ENCODE measurements at regions of chr21 and their contacts with region 1.

Region 1: DNA sequence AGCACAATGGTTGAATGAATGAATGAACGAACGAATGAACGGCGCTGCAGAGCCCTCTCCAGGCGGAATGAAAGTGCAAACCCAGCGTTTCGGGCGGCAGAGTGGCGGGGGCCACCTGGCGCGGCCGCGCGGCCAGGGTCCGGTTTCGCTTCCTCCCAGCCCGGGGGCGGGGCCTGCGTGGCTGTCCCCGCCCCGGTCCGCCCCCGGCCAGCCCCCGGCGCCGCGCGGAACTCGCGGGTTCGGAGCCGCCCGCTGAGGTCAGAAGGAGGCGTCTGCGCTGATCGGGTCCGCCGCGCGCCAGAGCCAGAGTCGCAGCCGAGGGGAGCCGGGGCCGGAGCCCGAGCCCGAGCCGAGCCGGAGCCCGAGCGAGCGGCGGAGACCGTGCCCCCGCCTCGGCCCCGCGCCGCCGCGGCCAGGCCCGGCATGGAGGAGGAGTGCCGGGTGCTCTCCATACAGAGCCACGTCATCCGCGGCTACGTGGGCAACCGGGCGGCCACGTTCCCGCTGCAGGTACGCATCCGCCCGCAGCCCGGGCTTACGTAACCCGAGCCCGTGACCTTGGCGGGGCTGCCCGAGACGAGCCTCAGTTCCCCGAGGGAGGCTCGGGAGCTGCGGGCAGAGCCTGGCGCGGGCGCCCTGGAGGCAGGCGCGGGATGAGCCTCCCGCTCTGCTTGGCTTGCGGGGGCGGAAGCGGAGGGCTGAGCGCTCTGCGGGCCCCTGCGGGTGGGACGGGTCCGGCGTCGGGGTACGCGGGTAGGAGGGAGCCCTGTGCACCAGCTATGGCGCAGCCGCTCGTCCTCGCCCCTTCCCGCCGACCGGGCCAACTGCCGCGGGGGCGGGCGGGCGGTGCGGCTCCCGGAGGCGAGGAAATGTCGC is at the start of gene PDXK:
- DNase-seq: peak; percentile 49 to 91 (median 75)
- ATAC-seq: peak; percentile 77
- H3K4me3 ChIP-seq: peak within 1 kb of the TSS; percentile 70 to 83
- H3K4me3 Mint-ChIP-seq: peak within 1 kb of the TSS; percentile 84
- H3K27ac ChIP-seq: peak within 1 kb of the TSS; percentile 48 to 74
- H3K27ac Mint-ChIP-seq: peak within 1 kb of the TSS; percentile 27
- H3K4me1 ChIP-seq: peaks cover 16% of the 10 kb centered on the region
- H3K4me1 Mint-ChIP-seq: peaks cover 29% of the 10 kb centered on the region
- H3K27me3 ChIP-seq: no peaks in the 10 kb centered on the region
- H3K27me3 Mint-ChIP-seq: no peaks in the 10 kb centered on the region
- CTCF ChIP-seq: no peak
- total RNA-seq, gene PDXK: 60.3 to 71.1 TPM

Region 2: DNA sequence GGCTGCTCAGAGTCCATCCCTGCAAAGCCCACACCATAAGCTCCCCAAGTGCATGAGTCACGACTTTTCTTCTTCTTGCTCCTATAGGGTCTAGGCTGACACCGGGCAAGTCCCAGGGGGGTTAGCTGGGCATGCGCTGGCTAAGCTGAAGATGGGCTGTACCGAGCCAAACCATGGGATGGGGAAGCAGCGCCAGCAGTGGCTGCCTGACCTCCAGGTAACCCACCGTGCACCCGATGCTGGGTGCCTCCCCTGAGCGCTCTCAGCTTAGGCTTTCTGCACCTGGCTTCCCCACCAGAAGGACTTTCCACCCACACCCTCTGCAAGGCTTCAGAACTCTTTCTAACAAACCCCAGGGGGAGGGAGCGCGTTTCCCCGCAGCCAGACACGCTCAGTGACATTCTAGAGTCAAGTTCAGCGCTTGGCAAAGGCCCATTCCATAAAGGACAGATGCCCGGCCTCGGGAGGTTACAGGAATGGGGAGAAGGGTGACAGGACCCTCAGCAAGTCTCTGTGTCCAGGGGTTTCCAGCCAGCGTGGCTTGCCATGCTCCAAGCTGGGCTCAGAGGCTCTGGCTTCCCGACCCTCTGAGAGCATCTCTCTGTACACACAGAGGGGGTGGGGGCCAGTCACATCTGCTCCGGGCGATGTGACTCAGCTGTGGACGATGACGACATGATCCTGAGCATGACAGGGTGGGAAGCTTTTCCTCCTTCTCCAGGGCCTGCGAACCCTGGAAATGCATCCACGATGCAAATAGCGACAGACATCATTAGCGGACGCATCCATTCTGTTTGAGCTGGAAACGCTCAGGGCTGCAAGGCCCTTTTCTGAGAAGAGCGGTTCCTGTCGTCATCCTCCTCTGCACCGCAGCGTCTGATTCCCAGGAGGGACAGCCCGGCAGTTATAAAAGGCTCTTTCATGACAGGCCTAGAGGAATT is 400.0 kb before region 1 on chr21:
- CTCF ChIA-PET with region 1: no interaction called
- POLR2A ChIA-PET with region 1: no interaction called
- intact Hi-C with region 1: no loop called
- DNase-seq: no peak
- ATAC-seq: no peak
- H3K4me3 ChIP-seq: no peak overlapping the region
- H3K4me3 Mint-ChIP-seq: no peak overlapping the region
- H3K27ac ChIP-seq: no peak overlapping the region
- H3K27ac Mint-ChIP-seq: no peak overlapping the region
- H3K4me1 ChIP-seq: no peaks in the 10 kb centered on the region
- H3K4me1 Mint-ChIP-seq: peaks cover 2% of the 10 kb centered on the region
- H3K27me3 ChIP-seq: no peaks in the 10 kb centered on the region
- H3K27me3 Mint-ChIP-seq: peaks cover 5% of the 10 kb centered on the region
- CTCF ChIP-seq: no peak

Region 3: GRCh38 chr21:43659136-43660000 is 59.7 kb before region 1 on chr21 and contains the starts of genes HSF2BP and RRP1B:
- CTCF ChIA-PET with region 1: no interaction called
- POLR2A ChIA-PET with region 1: no interaction called
- intact Hi-C with region 1: loop called (anchors 2 kb)
- DNase-seq: peak; percentile 65 to 91 (median 73)
- ATAC-seq: peak; percentile 82
- H3K4me3 ChIP-seq: peak within 1 kb of the TSS; percentile 81 to 84
- H3K4me3 Mint-ChIP-seq: peak within 1 kb of the TSS; percentile 93
- H3K27ac ChIP-seq: peak within 1 kb of the TSS; percentile 83 to 86
- H3K27ac Mint-ChIP-seq: peak within 1 kb of the TSS; percentile 92
- H3K4me1 ChIP-seq: peaks cover 31% of the 10 kb centered on the region
- H3K4me1 Mint-ChIP-seq: peaks cover 46% of the 10 kb centered on the region
- H3K27me3 ChIP-seq: no peaks in the 10 kb centered on the region
- H3K27me3 Mint-ChIP-seq: no peaks in the 10 kb centered on the region
- CTCF ChIP-seq: no peak
- total RNA-seq, gene HSF2BP: 0.64 to 1.3 TPM
- total RNA-seq, gene RRP1B: 24.3 to 26.1 TPM

Region 4: GRCh38 chr21:43697758-43698643 is 21.1 kb before region 1 on chr21:
- CTCF ChIA-PET with region 1: no interaction called
- POLR2A ChIA-PET with region 1: no interaction called
- intact Hi-C with region 1: no loop called
- DNase-seq: peak in 1 of 9 experiments; percentile 57
- ATAC-seq: peak; percentile 70
- H3K4me3 ChIP-seq: no peak overlapping the region
- H3K4me3 Mint-ChIP-seq: no peak overlapping the region
- H3K27ac ChIP-seq: no peak overlapping the region
- H3K27ac Mint-ChIP-seq: no peak overlapping the region
- H3K4me1 ChIP-seq: no peaks in the 10 kb centered on the region
- H3K4me1 Mint-ChIP-seq: peaks cover 12% of the 10 kb centered on the region
- H3K27me3 ChIP-seq: no peaks in the 10 kb centered on the region
- H3K27me3 Mint-ChIP-seq: no peaks in the 10 kb centered on the region
- CTCF ChIP-seq: no peak

Region 5: GRCh38 chr21:43775795-43776430 is 56.8 kb after region 1 on chr21 and contains the start of gene CSTB:
- CTCF ChIA-PET with region 1: no interaction called
- POLR2A ChIA-PET with region 1: no interaction called
- intact Hi-C with region 1: loop called (anchors 2 kb)
- DNase-seq: peak; percentile 65 to 92 (median 83)
- ATAC-seq: peak; percentile 79
- H3K4me3 ChIP-seq: peak within 1 kb of the TSS; percentile 63 to 91
- H3K4me3 Mint-ChIP-seq: peak within 1 kb of the TSS; percentile 91
- H3K27ac ChIP-seq: peak within 1 kb of the TSS; percentile 31 to 70
- H3K27ac Mint-ChIP-seq: peak within 1 kb of the TSS; percentile 83
- H3K4me1 ChIP-seq: peaks cover 19% of the 10 kb centered on the region
- H3K4me1 Mint-ChIP-seq: peaks cover 32% of the 10 kb centered on the region
- H3K27me3 ChIP-seq: no peaks in the 10 kb centered on the region
- H3K27me3 Mint-ChIP-seq: no peaks in the 10 kb centered on the region
- CTCF ChIP-seq: no peak
- total RNA-seq, gene CSTB: 7.4 to 7.7 TPM

Measured in CD8-positive, alpha-beta T cell (primary cell).